ENCODE measurements at regions of chr15 and their contacts with region 1.

Region 1: GRCh38 chr15:58957101-58957973 is 23.9 kb upstream of the SLTM start:
- DNase-seq: peak; percentile 75
- H3K4me3 Mint-ChIP-seq: no peak overlapping the region
- H3K27ac Mint-ChIP-seq: no peak overlapping the region
- H3K4me1 Mint-ChIP-seq: peaks cover 13% of the 10 kb centered on the region
- H3K27me3 Mint-ChIP-seq: no peaks in the 10 kb centered on the region
- CTCF ChIP-seq: peak; percentile 72

Region 2: GRCh38 chr15:58852347-58852746 is 105.0 kb before region 1 on chr15:
- CTCF ChIA-PET with region 1: no interaction called
- POLR2A ChIA-PET with region 1: no interaction called
- intact Hi-C with region 1: no loop called
- DNase-seq: no peak
- H3K4me3 Mint-ChIP-seq: no peak overlapping the region
- H3K27ac Mint-ChIP-seq: no peak overlapping the region
- H3K4me1 Mint-ChIP-seq: no peaks in the 10 kb centered on the region
- H3K27me3 Mint-ChIP-seq: no peaks in the 10 kb centered on the region
- CTCF ChIP-seq: no peak

Region 3: GRCh38 chr15:58933281-58934113 is 23.8 kb before region 1 on chr15 and contains the start of gene SLTM:
- CTCF ChIA-PET with region 1: interaction called, 12 read pairs
- POLR2A ChIA-PET with region 1: interaction called, 8 read pairs
- intact Hi-C with region 1: no loop called
- DNase-seq: peak; percentile 91
- H3K4me3 Mint-ChIP-seq: peak within 1 kb of the TSS; percentile 92
- H3K27ac Mint-ChIP-seq: peak within 1 kb of the TSS; percentile 99
- H3K4me1 Mint-ChIP-seq: peaks cover 11% of the 10 kb centered on the region
- H3K27me3 Mint-ChIP-seq: no peaks in the 10 kb centered on the region
- CTCF ChIP-seq: no peak
- total RNA-seq, gene SLTM: 108 and 117 TPM in 2 replicates

Region 4: GRCh38 chr15:59059076-59059597 is 101.8 kb after region 1 on chr15:
- CTCF ChIA-PET with region 1: no interaction called
- POLR2A ChIA-PET with region 1: no interaction called
- intact Hi-C with region 1: no loop called
- DNase-seq: no peak
- H3K4me3 Mint-ChIP-seq: no peak overlapping the region
- H3K27ac Mint-ChIP-seq: no peak overlapping the region
- H3K4me1 Mint-ChIP-seq: no peaks in the 10 kb centered on the region
- H3K27me3 Mint-ChIP-seq: no peaks in the 10 kb centered on the region
- CTCF ChIP-seq: no peak

Measured in MCF 10A (cell line).